ENCODE measurements at regions of chr11 and their contacts with region 1.

Region 1: GRCh38 chr11:110023711-110024110 is 69.5 kb upstream of the ZC3H12C start:
- DNase-seq: peak; percentile 89
- H3K4me3 ChIP-seq: no peak overlapping the region
- H3K27ac ChIP-seq: peak overlapping the region; percentile 72
- H3K4me1 ChIP-seq: peaks cover 31% of the 10 kb centered on the region
- H3K27me3 ChIP-seq: no peaks in the 10 kb centered on the region
- CTCF ChIP-seq: no peak

Region 2: GRCh38 chr11:110279881-110280280 is 256.2 kb after region 1 on chr11:
- CTCF ChIA-PET with region 1: no interaction called
- POLR2A ChIA-PET with region 1: interaction called, 15 read pairs
- intact Hi-C with region 1: no loop called
- DNase-seq: peak; percentile 42
- H3K4me3 ChIP-seq: no peak overlapping the region
- H3K27ac ChIP-seq: peak overlapping the region; percentile 45
- H3K4me1 ChIP-seq: peaks cover 13% of the 10 kb centered on the region
- H3K27me3 ChIP-seq: no peaks in the 10 kb centered on the region
- CTCF ChIP-seq: no peak

Measured in A673 (cell line).